ENCODE measurements at regions of chr17 and their contacts with region 1.

Region 1: DNA sequence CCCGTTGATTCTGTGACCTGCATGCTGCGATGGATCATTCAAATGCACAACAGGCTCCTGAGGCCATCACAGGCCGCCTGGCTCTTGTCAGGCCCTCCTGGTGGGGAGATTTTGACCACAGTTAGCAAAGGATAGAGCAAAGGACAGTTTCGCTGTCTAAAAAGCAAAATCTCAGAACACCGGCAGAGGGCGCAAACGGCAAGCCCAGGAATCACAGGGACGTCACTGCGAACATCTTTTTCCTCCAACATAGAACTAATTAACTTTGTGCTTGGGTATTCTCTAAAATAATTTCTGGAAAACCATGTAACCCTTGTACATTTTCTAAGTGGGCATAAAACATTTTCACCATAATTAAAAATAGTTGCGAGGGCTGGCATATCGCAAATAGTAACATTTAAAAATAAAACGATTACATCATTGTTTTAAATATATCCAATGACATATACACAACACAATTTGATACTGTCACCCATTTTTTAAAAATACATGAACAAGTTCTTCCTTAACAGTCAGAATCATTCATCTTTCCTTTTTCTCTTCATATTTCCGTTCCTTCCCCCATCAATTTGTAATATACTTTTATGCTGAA is 19.7 kb upstream of the SLC47A1 start:
- DNase-seq: no peak
- ATAC-seq: peak; percentile 86
- H3K4me3 ChIP-seq: no peak overlapping the region
- H3K27ac ChIP-seq: no peak overlapping the region
- H3K4me1 ChIP-seq: peaks cover 2% of the 10 kb centered on the region; the same call in 1 of the 2 replicates
- H3K27me3 ChIP-seq: no peaks in the 10 kb centered on the region
- CTCF ChIP-seq: peak; percentile 82 to 90 (median 88)
- EP300 ChIP-seq: no peak
- POLR2A ChIP-seq: no peak
- RAD21 ChIP-seq: peak; percentile 93

Region 2: GRCh38 chr17:19579867-19580565 is 66.0 kb after region 1 on chr17:
- CTCF ChIA-PET with region 1: no interaction called
- POLR2A ChIA-PET with region 1: no interaction called
- RAD21 ChIA-PET with region 1: no interaction called
- SMC1A ChIA-PET with region 1: no interaction called
- in situ Hi-C with region 1: no loop called
- intact Hi-C with region 1: no loop called
- DNase-seq: no peak
- ATAC-seq: no peak
- H3K4me3 ChIP-seq: no peak overlapping the region
- H3K27ac ChIP-seq: no peak overlapping the region
- H3K4me1 ChIP-seq: no peaks in the 10 kb centered on the region
- H3K27me3 ChIP-seq: peaks cover 4% of the 10 kb centered on the region in 2 experiments
- CTCF ChIP-seq: no peak
- EP300 ChIP-seq: no peak
- POLR2A ChIP-seq: no peak
- RAD21 ChIP-seq: no peak

Region 3: DNA sequence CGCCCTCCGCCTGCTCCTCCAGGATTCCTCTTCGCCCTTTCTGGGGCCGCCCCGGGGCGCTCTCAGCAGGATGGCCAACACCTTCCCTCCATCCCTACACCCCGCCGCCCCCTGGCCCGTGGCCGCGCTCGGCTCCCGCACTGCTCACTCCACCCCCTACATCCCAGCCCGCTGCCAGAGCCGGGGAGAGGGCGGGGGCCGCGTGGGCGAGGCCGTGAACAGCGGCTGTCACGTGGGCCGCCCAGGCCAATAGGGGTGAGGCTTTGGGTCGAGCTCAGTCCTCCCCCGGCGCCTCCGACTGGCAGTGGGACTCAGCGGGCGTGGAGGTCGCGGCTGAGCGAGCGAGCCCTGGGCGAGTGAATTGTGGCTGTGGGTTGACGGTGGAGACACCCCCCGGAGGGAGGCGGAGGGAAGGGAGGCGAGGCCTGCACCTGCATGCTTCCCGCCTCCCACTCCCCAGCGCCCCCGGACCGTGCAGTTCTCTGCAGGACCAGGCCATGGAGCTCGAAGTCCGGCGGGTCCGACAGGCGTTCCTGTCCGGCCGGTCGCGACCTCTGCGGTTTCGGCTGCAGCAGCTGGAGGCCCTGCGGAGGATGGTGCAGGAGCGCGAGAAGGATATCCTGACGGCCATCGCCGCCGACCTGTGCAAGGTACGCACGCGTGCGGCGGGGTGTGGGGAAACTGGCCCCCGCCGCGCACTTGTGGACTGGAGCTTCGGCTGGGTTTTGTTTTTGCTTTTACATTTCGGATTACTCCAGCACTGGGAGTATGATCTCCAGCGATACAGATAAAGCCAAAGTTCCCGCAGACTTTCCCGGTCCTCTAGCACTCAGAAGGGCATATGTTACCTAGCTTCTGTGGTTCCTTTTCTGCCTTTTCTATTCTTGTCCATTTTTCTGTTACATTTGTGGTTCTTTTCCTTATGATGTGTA is 134.7 kb after region 1 on chr17 and contains the start of gene ALDH3A2:
- CTCF ChIA-PET with region 1: interaction called, 12 read pairs
- POLR2A ChIA-PET with region 1: no interaction called
- RAD21 ChIA-PET with region 1: interaction called, 6 read pairs
- SMC1A ChIA-PET with region 1: interaction called, 5 read pairs
- in situ Hi-C with region 1: no loop called
- intact Hi-C with region 1: loop called (anchors 5 kb)
- DNase-seq: peak; percentile 68
- ATAC-seq: peak; percentile 98
- H3K4me3 ChIP-seq: peak within 1 kb of the TSS; percentile 65
- H3K27ac ChIP-seq: peak within 1 kb of the TSS; percentile 74
- H3K4me1 ChIP-seq: peaks cover 8% of the 10 kb centered on the region; the same call in 1 of the 2 replicates
- H3K27me3 ChIP-seq: no peaks in the 10 kb centered on the region
- CTCF ChIP-seq: 0 out of 6 replicates have a peak, but pooled peaks of 1 of the 3 experiments have one; percentile 11
- EP300 ChIP-seq: no peak
- POLR2A ChIP-seq: peak; percentile 95
- RAD21 ChIP-seq: no peak
- polyA plus RNA-seq, gene ALDH3A2: 5.0 to 7.9 TPM

Measured in GM12878 (cell line).